SK-N-SH (cell line): ENCODE measurements at regions of chr2 and their contacts with region 1.

Region 1: DNA sequence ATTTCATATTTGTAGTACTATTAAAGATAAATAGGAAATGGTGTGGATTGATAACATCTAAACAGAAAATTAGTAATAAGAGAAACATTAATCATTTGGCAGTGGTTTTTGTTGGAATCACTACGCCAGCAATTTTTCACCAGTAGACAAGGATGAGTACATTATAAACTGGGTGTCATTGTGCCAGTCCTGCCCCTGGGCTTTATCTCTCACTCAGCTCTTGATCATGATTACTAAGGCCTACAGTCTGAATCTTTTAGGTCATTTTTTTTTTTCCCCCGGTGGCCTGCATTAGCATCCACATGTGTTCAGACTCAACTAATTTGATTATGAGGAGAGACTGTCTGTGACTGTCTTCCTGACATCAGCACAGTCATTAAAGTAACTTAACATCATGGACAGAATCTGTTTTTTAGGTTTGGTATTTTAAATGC is 16.2 kb downstream of the GULP1 start:
- DNase-seq: peak; percentile 65
- H3K4me3 ChIP-seq: no peak overlapping the region
- H3K27ac ChIP-seq: peak overlapping the region; percentile 67 to 99
- H3K4me1 ChIP-seq: peaks cover 37 to 44% of the 10 kb centered on the region in 2 experiments
- H3K27me3 ChIP-seq: no peaks in the 10 kb centered on the region
- CTCF ChIP-seq: no peak
- EP300 ChIP-seq: peak; percentile 75 to 95
- RAD21 ChIP-seq: peak; percentile 45

Region 2: GRCh38 chr2:188319830-188320229 is 12.0 kb after region 1 on chr2:
- CTCF ChIA-PET with region 1: interaction called, 11 read pairs
- POLR2A ChIA-PET with region 1: interaction called, 3 read pairs
- DNase-seq: no peak
- H3K4me3 ChIP-seq: no peak overlapping the region
- H3K27ac ChIP-seq: no peak overlapping the region; a peak in 1 of 4 replicates
- H3K4me1 ChIP-seq: peaks cover 16 to 49% of the 10 kb centered on the region in 2 experiments
- H3K27me3 ChIP-seq: no peaks in the 10 kb centered on the region
- CTCF ChIP-seq: 0 out of 2 replicates have a peak, but pooled peaks have one; percentile 17
- EP300 ChIP-seq: no peak
- RAD21 ChIP-seq: no peak